Left ventricle myocardium inferior (tissue), 1 donor: ENCODE measurements at regions of chr1 and their contacts with region 1.

Region 1: DNA sequence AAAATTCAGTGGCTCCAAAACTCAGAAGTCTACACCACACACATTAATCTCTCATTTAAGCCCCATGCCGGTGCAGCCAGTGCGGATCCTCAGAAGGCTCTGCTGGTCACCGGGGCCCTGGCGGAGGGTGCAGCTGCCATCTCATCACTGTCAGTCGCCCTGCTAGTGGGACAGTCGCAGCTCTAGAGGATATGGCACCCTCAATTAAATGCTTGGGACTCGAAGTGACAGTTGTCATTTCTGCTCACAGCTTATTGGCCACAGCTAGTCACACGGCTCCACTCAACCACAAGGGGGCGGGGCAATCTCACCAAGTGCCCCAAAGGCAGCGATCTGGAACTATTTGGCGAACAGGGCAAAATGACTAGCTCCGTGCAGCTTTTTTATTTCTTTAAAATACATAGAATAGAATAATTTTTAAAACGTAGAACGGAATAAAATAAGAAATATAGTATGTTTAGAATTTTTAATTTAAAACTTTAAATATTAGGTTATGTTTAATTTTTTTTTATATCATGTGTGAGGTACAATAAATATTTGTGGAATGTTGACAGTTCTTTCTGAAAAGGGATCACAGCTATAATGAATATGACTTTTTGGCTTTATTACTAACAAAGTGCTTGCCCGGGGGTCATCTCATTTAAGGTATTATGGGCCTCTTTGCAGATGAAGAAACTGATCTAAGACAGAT is 8.0 kb upstream of the MAN1C1 start:
- DNase-seq: peak; percentile 88
- H3K4me3 ChIP-seq: peak overlapping the region; percentile 44
- H3K27ac ChIP-seq: no peak overlapping the region
- H3K4me1 ChIP-seq: peaks cover 10% of the 10 kb centered on the region
- H3K27me3 ChIP-seq: no peaks in the 10 kb centered on the region
- CTCF ChIP-seq: peak; percentile 85

Region 2: GRCh38 chr1:25796811-25797458 is 188.3 kb after region 1 on chr1:
- intact Hi-C with region 1: loop called (anchors 2 kb)
- DNase-seq: peak; percentile 87
- H3K4me3 ChIP-seq: no peak overlapping the region
- H3K27ac ChIP-seq: peak overlapping the region; percentile 66
- H3K4me1 ChIP-seq: peaks cover 58% of the 10 kb centered on the region
- H3K27me3 ChIP-seq: no peaks in the 10 kb centered on the region
- CTCF ChIP-seq: peak; percentile 77